Transverse colon (tissue), 4 donors: ENCODE measurements at regions of chr1 and their contacts with region 1.

Region 1: GRCh38 chr1:161801955-161802354 is 35.8 kb downstream of the ATF6 start:
- DNase-seq: no peak
- H3K4me3 ChIP-seq: no peak overlapping the region
- H3K27ac ChIP-seq: peak overlapping the region in 2 of 4 donors; percentile 0 to 1
- H3K4me1 ChIP-seq: peaks cover 0 to 20% (median 0%) of the 10 kb centered on the region in 4 donors
- H3K27me3 ChIP-seq: no peaks in the 10 kb centered on the region
- CTCF ChIP-seq: no peak
- EP300 ChIP-seq: no peak
- POLR2A ChIP-seq: no peak

Region 2: GRCh38 chr1:162035241-162035640 is 233.3 kb after region 1 on chr1:
- in situ Hi-C with region 1: loop called in 3 of 4 experiments (anchors 10 to 25 kb)
- intact Hi-C with region 1: no loop called
- DNase-seq: no peak
- H3K4me3 ChIP-seq: no peak overlapping the region
- H3K27ac ChIP-seq: no peak overlapping the region
- H3K4me1 ChIP-seq: no peaks in the 10 kb centered on the region
- H3K27me3 ChIP-seq: peaks cover 8% of the 10 kb centered on the region
- CTCF ChIP-seq: no peak
- EP300 ChIP-seq: no peak
- POLR2A ChIP-seq: no peak

Region 3: DNA sequence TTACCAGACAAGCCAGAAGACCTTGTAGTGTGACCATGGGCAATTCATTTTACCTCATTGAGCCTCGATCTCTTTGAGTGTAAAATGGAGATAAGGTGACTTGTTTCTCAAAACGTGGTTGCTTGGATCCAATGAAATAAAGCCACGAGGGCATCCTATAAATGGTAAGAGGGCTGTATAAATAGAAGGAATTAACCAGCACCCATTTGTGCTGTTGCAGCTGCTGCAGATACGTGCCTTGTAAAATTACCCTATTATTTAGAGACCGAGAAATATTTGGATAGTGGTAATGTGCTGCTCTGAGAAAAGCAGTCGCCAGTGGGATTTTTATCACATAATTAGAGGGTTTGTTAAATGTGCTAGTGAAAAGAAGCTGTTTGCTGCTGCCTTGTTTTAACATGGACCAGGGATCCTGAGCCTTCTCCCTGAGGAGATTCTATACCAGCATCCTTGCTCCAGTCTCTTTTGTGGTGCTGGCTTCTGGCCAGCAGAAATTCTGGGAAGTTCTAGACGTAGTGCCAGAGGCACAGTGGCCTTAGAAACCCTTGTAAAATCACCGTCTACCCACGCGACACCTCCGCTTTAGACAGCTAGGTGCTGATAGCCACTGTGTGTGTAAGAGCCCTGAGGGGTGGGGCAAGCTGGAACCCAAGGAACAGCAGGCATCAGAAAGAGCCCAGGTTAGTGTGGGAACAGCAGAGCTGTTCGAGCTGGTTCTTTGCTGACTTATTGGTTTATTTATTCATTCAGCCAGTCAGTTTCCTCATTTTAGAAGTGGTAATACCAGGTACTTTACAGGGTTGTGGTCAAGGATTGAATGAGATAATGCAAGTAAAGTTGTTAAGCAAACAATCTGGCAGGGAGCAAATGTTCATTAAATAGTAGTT is 405.0 kb after region 1 on chr1:
- in situ Hi-C with region 1: no loop called
- intact Hi-C with region 1: no loop called
- DNase-seq: peak; percentile 62
- H3K4me3 ChIP-seq: no peak overlapping the region
- H3K27ac ChIP-seq: peak overlapping the region; percentile 66 to 84 (median 76)
- H3K4me1 ChIP-seq: peaks cover 3 to 41% (median 16%) of the 10 kb centered on the region in 4 donors
- H3K27me3 ChIP-seq: no peaks in the 10 kb centered on the region
- CTCF ChIP-seq: peak in 2 of 5 experiments; percentile 29 to 50
- EP300 ChIP-seq: no peak
- POLR2A ChIP-seq: no peak

Region 4: GRCh38 chr1:162357681-162358266 is 555.8 kb after region 1 on chr1:
- in situ Hi-C with region 1: no loop called
- intact Hi-C with region 1: no loop called
- DNase-seq: no peak
- H3K4me3 ChIP-seq: no peak overlapping the region
- H3K27ac ChIP-seq: no peak overlapping the region
- H3K4me1 ChIP-seq: peaks cover 0 to 7% (median 0%) of the 10 kb centered on the region in 4 donors
- H3K27me3 ChIP-seq: no peaks in the 10 kb centered on the region
- CTCF ChIP-seq: peak; percentile 41 to 64 (median 51)
- EP300 ChIP-seq: no peak
- POLR2A ChIP-seq: no peak